ENCODE measurements at regions of chr17 and their contacts with region 1.

Region 1: GRCh38 chr17:50853015-50853615 is 13.0 kb downstream of the TOB1 start:
- DNase-seq: no peak
- H3K4me3 Mint-ChIP-seq: peak overlapping the region; percentile 53
- H3K27ac Mint-ChIP-seq: peak overlapping the region; percentile 82
- H3K4me1 Mint-ChIP-seq: peaks cover 18% of the 10 kb centered on the region
- H3K27me3 Mint-ChIP-seq: peaks cover 21% of the 10 kb centered on the region

Region 2: GRCh38 chr17:50765454-50766221 is 87.5 kb before region 1 on chr17:
- intact Hi-C with region 1: no loop called
- DNase-seq: no peak
- H3K4me3 Mint-ChIP-seq: no peak overlapping the region
- H3K27ac Mint-ChIP-seq: no peak overlapping the region
- H3K4me1 Mint-ChIP-seq: no peaks in the 10 kb centered on the region
- H3K27me3 Mint-ChIP-seq: peaks cover 29% of the 10 kb centered on the region

Region 3: DNA sequence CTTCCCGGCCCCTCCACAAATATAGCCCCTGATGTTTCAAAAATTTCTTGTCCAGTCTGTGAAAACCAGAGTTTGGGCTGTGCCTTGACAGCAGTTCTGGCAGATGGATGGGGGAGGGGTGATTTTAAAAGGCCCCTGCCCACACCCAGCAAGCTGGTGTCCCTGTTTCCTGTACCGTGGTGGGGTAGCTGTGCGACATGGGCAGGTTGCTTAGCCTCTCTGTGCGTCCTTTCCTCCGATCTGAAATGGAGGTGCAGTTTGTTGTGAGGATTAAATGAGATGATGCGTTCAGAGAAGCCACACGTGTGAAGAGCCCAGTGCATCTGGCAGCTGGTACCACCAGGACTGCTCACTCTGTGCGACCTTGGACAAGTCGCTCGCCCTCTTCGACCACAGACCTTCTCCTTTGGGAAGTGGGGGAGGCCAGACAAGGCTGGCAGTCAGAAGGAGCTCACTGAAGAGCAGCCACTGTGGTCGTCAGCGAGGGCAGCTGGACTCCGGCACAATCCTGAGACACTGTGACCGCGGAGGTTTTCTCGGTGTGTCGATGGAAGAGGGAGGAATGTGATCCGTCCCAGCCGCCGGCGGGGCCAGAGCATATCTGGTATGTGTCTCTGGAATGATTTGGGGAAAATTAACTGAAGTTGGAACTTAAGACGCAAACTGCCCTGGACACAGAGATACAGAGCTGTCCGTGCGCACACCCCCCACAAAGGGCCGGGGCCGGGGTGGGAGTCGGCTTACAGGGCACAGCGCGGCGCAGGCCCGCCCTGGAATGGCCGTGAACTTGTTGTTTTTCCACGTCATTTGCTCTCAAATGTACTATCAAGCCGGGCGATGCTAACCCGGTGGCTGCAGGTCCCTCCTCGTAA is 18.4 kb before region 1 on chr17:
- intact Hi-C with region 1: no loop called
- DNase-seq: no peak
- H3K4me3 Mint-ChIP-seq: no peak overlapping the region
- H3K27ac Mint-ChIP-seq: no peak overlapping the region
- H3K4me1 Mint-ChIP-seq: no peaks in the 10 kb centered on the region
- H3K27me3 Mint-ChIP-seq: peaks cover 4% of the 10 kb centered on the region

Region 4: GRCh38 chr17:50919321-50920085 is 66.4 kb after region 1 on chr17:
- intact Hi-C with region 1: no loop called
- DNase-seq: peak; percentile 95
- H3K4me3 Mint-ChIP-seq: peak overlapping the region; percentile 77
- H3K27ac Mint-ChIP-seq: peak overlapping the region; percentile 93
- H3K4me1 Mint-ChIP-seq: peaks cover 34% of the 10 kb centered on the region
- H3K27me3 Mint-ChIP-seq: peaks cover under 1% of the 10 kb centered on the region

Region 5: GRCh38 chr17:50949989-50950881 is 97.1 kb after region 1 on chr17:
- intact Hi-C with region 1: loop called (anchors 1 kb)
- DNase-seq: peak; percentile 85
- H3K4me3 Mint-ChIP-seq: no peak overlapping the region
- H3K27ac Mint-ChIP-seq: no peak overlapping the region
- H3K4me1 Mint-ChIP-seq: peaks cover 24% of the 10 kb centered on the region
- H3K27me3 Mint-ChIP-seq: no peaks in the 10 kb centered on the region

Region 6: DNA sequence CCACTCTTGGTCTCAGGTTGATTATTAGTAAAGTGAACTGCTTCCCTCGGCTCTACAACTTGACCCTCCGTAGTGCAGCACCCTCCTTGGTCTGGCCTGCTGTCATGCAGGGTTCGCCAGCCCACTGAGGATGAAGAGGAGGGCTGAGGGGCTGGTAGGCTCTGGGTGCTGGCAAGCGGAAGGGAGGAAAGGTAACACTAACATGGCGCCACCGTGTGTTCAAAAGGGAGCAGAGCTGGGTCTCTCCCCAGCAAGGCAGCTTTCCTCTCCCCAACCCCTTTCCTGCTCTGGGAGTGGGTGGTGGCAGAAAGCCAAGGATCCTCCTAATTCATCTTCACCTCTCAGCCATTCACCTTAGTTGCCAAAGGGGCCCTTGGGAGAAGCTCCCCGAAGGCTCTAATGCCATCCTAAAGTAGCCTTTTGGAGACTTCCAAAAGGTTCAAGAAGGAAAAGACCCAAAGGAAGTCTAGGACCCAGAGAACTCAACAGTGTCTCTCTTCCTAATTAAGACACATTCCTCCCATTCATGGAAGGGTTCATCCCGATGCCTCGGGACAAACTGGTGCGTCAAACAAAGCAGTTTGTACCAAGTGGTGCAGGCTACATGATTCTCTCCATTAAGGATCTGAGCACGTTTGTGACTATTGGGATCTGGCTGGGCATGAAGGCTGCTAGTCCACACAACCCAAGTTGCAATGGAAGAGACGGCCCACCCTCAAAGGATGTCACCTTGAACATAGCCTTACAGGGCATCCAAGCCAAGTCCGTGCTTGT is 103.8 kb after region 1 on chr17:
- intact Hi-C with region 1: loop called (anchors 1 kb)
- DNase-seq: peak; percentile 90
- H3K4me3 Mint-ChIP-seq: no peak overlapping the region
- H3K27ac Mint-ChIP-seq: no peak overlapping the region
- H3K4me1 Mint-ChIP-seq: peaks cover 6% of the 10 kb centered on the region
- H3K27me3 Mint-ChIP-seq: no peaks in the 10 kb centered on the region

Region 7: GRCh38 chr17:51015145-51015558 is 162.0 kb after region 1 on chr17:
- intact Hi-C with region 1: no loop called
- DNase-seq: no peak
- H3K4me3 Mint-ChIP-seq: no peak overlapping the region
- H3K27ac Mint-ChIP-seq: no peak overlapping the region
- H3K4me1 Mint-ChIP-seq: peaks cover 3% of the 10 kb centered on the region
- H3K27me3 Mint-ChIP-seq: no peaks in the 10 kb centered on the region

Measured in activated CD4-positive, alpha-beta T cell treated with anti-CD3 and anti-CD28 coated beads, Interleukin-2, amount 10 ng/mL, durations not matched to agents 24 days and 14 days (primary cell).